ENCODE measurements at regions of chr7 and their contacts with region 1.

Region 1: GRCh38 chr7:134355927-134356326 is 39.2 kb upstream of the SLC35B4 start:
- DNase-seq: no peak
- H3K4me3 ChIP-seq: no peak overlapping the region
- H3K27ac ChIP-seq: no peak overlapping the region
- H3K27me3 ChIP-seq: no peaks in the 10 kb centered on the region
- CTCF ChIP-seq: no peak

Region 2: GRCh38 chr7:134016223-134016941 is 339.5 kb before region 1 on chr7:
- intact Hi-C with region 1: loop called in 1 of 2 experiments (anchors 10 kb)
- DNase-seq: peak in 5 of 10 donors; percentile 25 to 55 (median 36)
- H3K4me3 ChIP-seq: no peak overlapping the region
- H3K27ac ChIP-seq: no peak overlapping the region
- H3K27me3 ChIP-seq: no peaks in the 10 kb centered on the region
- CTCF ChIP-seq: peak; percentile 44 to 92 (median 76)